Sigmoid colon (tissue), 7 donors: ENCODE measurements at regions of chr2 and their contacts with region 1.

Region 1: GRCh38 chr2:188369365-188369764 is 77.7 kb downstream of the GULP1 start:
- DNase-seq: no peak
- H3K4me3 ChIP-seq: no peak overlapping the region
- H3K27ac ChIP-seq: no peak overlapping the region
- H3K4me1 ChIP-seq: no peaks in the 10 kb centered on the region
- H3K27me3 ChIP-seq: no peaks in the 10 kb centered on the region
- CTCF ChIP-seq: peak; percentile 15 to 58 (median 45)
- EP300 ChIP-seq: no peak
- POLR2A ChIP-seq: no peak

Region 2: DNA sequence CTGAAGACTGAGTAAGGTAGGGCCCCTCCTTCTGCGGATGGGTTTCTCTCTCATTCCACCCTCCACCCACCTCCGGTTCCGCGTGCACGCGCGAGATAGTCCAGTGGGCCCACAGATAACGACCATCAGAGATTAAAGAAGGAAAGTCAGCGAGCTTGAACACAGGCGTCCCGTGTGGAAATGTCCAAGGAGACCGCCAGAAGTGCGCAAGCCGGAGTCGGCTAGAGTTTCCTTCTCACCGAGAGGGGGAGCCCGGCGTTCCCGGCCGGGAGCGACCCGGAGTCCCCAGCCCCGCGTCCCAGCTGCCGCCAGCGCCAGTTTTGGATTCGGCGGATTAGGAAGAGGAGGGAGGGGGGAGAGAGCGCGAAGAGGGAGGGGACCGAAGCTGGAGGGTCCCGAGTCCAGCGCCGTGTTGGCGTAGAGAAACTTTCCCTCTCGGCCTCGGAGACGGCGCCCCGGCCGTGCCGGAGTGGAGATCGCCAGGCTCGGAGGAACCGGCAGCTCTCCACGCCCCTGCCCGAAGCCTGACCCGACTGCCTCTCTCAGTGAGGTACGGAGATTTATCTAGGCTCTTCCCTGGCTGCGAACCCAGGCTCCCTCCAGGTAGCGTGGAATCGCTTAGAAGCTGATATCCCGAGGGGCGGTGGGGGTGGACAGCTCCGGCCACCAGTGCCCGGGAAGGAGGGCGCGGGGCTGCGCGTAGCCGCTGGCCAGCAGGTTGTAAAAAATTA is 77.6 kb before region 1 on chr2 and contains the start of gene GULP1:
- intact Hi-C with region 1: loop called (anchors 5 kb)
- DNase-seq: peak; percentile 90
- H3K4me3 ChIP-seq: peak within 1 kb of the TSS; percentile 77 to 90 (median 84)
- H3K27ac ChIP-seq: peak within 1 kb of the TSS; percentile 92 to 98 (median 95)
- H3K4me1 ChIP-seq: peaks cover 0 to 33% (median 26%) of the 10 kb centered on the region in 4 donors
- H3K27me3 ChIP-seq: no peaks in the 10 kb centered on the region
- CTCF ChIP-seq: peak; percentile 39 to 72 (median 57)
- EP300 ChIP-seq: no peak
- POLR2A ChIP-seq: no peak
- total RNA-seq, gene GULP1: 50.9 to 56.1 (median 53.5) TPM